Prostate gland (tissue), 2 donors: ENCODE measurements at regions of chr10 and their contacts with region 1.

Region 1: GRCh38 chr10:68301790-68302502 is 29.9 kb upstream of the HNRNPH3 start:
- DNase-seq: no peak
- H3K4me3 ChIP-seq: no peak overlapping the region
- H3K27ac ChIP-seq: no peak overlapping the region
- H3K4me1 ChIP-seq: no peaks in the 10 kb centered on the region
- H3K27me3 ChIP-seq: no peaks in the 10 kb centered on the region
- CTCF ChIP-seq: peak in 3 of 4 experiments; percentile 39 to 61 (median 56)
- POLR2A ChIP-seq: no peak

Region 2: GRCh38 chr10:67849331-67850011 is 452.5 kb before region 1 on chr10:
- intact Hi-C with region 1: loop called (anchors 10 kb)
- DNase-seq: peak; percentile 91
- H3K4me3 ChIP-seq: peak overlapping the region; percentile 39 to 66
- H3K27ac ChIP-seq: peak overlapping the region; percentile 81 to 89
- H3K4me1 ChIP-seq: no peaks in the 10 kb centered on the region
- H3K27me3 ChIP-seq: no peaks in the 10 kb centered on the region
- CTCF ChIP-seq: peak in 1 of 4 experiments; percentile 24
- POLR2A ChIP-seq: peak; percentile 61

Region 3: GRCh38 chr10:68082872-68083271 is 219.1 kb before region 1 on chr10:
- intact Hi-C with region 1: loop called (anchors 10 kb)
- DNase-seq: no peak
- H3K4me3 ChIP-seq: no peak overlapping the region
- H3K27ac ChIP-seq: no peak overlapping the region
- H3K4me1 ChIP-seq: no peaks in the 10 kb centered on the region
- H3K27me3 ChIP-seq: no peaks in the 10 kb centered on the region
- CTCF ChIP-seq: peak in 1 of 4 experiments; percentile 47
- POLR2A ChIP-seq: no peak

Region 4: GRCh38 chr10:68192113-68192512 is 109.8 kb before region 1 on chr10:
- intact Hi-C with region 1: no loop called
- DNase-seq: no peak
- H3K4me3 ChIP-seq: no peak overlapping the region
- H3K27ac ChIP-seq: no peak overlapping the region
- H3K4me1 ChIP-seq: no peaks in the 10 kb centered on the region
- H3K27me3 ChIP-seq: no peaks in the 10 kb centered on the region
- CTCF ChIP-seq: no peak
- POLR2A ChIP-seq: no peak

Region 5: GRCh38 chr10:68212721-68213352 is 89.1 kb before region 1 on chr10:
- intact Hi-C with region 1: loop called (anchors 10 kb)
- DNase-seq: no peak
- H3K4me3 ChIP-seq: no peak overlapping the region
- H3K27ac ChIP-seq: no peak overlapping the region
- H3K4me1 ChIP-seq: no peaks in the 10 kb centered on the region
- H3K27me3 ChIP-seq: no peaks in the 10 kb centered on the region
- CTCF ChIP-seq: peak in 3 of 4 experiments; percentile 50 to 58 (median 52)
- POLR2A ChIP-seq: no peak